ENCODE measurements at regions of chr3 and their contacts with region 1.

Region 1: DNA sequence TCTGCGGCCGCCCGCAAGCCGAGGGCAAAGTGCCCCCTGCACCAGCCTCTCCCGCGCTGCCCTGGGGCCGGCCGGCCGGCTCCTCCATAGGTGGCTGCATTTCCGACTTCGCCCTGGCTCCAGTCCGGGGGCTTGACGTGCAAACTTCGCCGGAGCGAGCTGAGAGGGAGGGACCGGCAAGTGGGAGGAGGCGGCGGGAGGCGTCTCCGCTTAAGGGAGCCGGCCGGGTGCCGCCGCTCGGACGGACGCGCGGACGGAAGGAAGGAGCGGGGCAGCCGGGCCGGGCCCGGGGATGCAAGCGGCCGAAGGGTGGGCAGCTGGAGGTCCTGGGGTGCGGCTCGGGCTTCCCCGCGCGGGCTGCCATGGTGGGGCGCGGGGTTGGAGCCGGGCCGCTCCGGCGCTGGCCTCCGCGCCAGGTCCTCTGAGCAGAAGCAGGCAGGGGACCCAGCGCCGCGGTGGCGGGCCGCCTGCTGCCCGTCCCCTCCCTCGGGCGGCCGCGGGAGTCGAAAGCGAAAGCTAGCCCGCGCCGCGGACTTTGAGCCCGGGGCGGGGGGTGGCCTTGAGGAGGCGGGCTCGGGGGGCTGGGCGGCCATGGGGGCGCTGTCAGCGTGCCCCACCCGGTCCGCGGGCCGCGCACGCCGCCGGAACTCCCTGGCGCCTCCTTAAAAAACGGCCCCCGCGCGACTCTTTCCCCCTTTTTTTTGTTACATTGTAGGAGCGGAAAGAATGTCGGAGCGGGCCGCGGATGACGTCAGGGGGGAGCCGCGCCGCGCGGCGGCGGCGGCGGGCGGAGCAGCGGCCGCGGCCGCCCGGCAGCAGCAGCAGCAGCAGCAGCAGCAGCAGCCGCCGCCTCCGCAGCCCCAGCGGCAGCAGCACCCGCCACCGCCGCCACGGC is at the start of gene SCAANT1:
- DNase-seq: peak; percentile 63 to 93 (median 77)
- ATAC-seq: peak; percentile 64
- H3K4me3 ChIP-seq: peak within 1 kb of the TSS; percentile 64
- H3K4me3 Mint-ChIP-seq: peak within 1 kb of the TSS; percentile 93
- H3K27ac ChIP-seq: peak within 1 kb of the TSS; percentile 70 to 83
- H3K27ac Mint-ChIP-seq: peak within 1 kb of the TSS; percentile 94
- H3K4me1 ChIP-seq: peaks cover 24% of the 10 kb centered on the region
- H3K4me1 Mint-ChIP-seq: peaks cover 44% of the 10 kb centered on the region
- H3K27me3 ChIP-seq: no peaks in the 10 kb centered on the region
- H3K27me3 Mint-ChIP-seq: no peaks in the 10 kb centered on the region
- CTCF ChIP-seq: no peak
- total RNA-seq, gene SCAANT1: 1.4 to 2.1 TPM

Region 2: GRCh38 chr3:63863148-63864007 is 48.7 kb before region 1 on chr3 and contains the starts of genes ATXN7 and THOC7:
- CTCF ChIA-PET with region 1: no interaction called
- POLR2A ChIA-PET with region 1: interaction called, 20 read pairs
- intact Hi-C with region 1: loop called (anchors 1 to 2 kb)
- DNase-seq: peak; percentile 55 to 89 (median 68)
- ATAC-seq: peak; percentile 84
- H3K4me3 ChIP-seq: peak within 1 kb of the TSS; percentile 85
- H3K4me3 Mint-ChIP-seq: peak within 1 kb of the TSS; percentile 89
- H3K27ac ChIP-seq: peak within 1 kb of the TSS in 1 of 2 donors; percentile 50
- H3K27ac Mint-ChIP-seq: peak within 1 kb of the TSS; percentile 86
- H3K4me1 ChIP-seq: peaks cover 34% of the 10 kb centered on the region
- H3K4me1 Mint-ChIP-seq: peaks cover 73% of the 10 kb centered on the region
- H3K27me3 ChIP-seq: no peaks in the 10 kb centered on the region
- H3K27me3 Mint-ChIP-seq: no peaks in the 10 kb centered on the region
- CTCF ChIP-seq: no peak
- total RNA-seq, gene ATXN7: 289 to 304 TPM
- total RNA-seq, gene THOC7: 21.6 to 23.7 TPM

Region 3: GRCh38 chr3:63951492-63952247 is 39.5 kb after region 1 on chr3:
- CTCF ChIA-PET with region 1: no interaction called
- POLR2A ChIA-PET with region 1: interaction called, 4 read pairs
- intact Hi-C with region 1: loop called in 1 of 2 experiments (anchors 2 kb)
- DNase-seq: peak in 1 of 14 experiments; percentile 51
- ATAC-seq: no peak
- H3K4me3 ChIP-seq: peak overlapping the region; percentile 9
- H3K4me3 Mint-ChIP-seq: peak overlapping the region; percentile 14
- H3K27ac ChIP-seq: peak overlapping the region in 1 of 2 donors; percentile 8
- H3K27ac Mint-ChIP-seq: peak overlapping the region; percentile 66
- H3K4me1 ChIP-seq: peaks cover 21% of the 10 kb centered on the region
- H3K4me1 Mint-ChIP-seq: peaks cover 53% of the 10 kb centered on the region
- H3K27me3 ChIP-seq: no peaks in the 10 kb centered on the region
- H3K27me3 Mint-ChIP-seq: no peaks in the 10 kb centered on the region
- CTCF ChIP-seq: no peak

Measured in CD4-positive, alpha-beta T cell (primary cell).